ENCODE measurements at regions of chr10 and their contacts with region 1.

Region 1: GRCh38 chr10:70146489-70147258 is at the start of gene TYSND1:
- DNase-seq: peak; percentile 97
- ATAC-seq: peak; percentile 90
- H3K4me3 ChIP-seq: peak within 1 kb of the TSS; percentile 66 to 92 (median 77)
- H3K27ac ChIP-seq: peak within 1 kb of the TSS; percentile 81
- H3K4me1 ChIP-seq: peaks cover 24% of the 10 kb centered on the region
- H3K27me3 ChIP-seq: no peaks in the 10 kb centered on the region
- CTCF ChIP-seq: peak; percentile 97
- EP300 ChIP-seq: no peak; a peak in 1 of 4 replicates
- POLR2A ChIP-seq: peak; percentile 93 to 96
- RAD21 ChIP-seq: peak; percentile 83
- total RNA-seq, gene TYSND1: 6.8 and 8.9 TPM in 2 replicates

Region 2: GRCh38 chr10:69684020-69684980 is 462.4 kb before region 1 on chr10:
- CTCF ChIA-PET with region 1: no interaction called
- POLR2A ChIA-PET with region 1: no interaction called
- in situ Hi-C with region 1: no loop called
- intact Hi-C with region 1: no loop called
- DNase-seq: peak; percentile 46
- ATAC-seq: peak; percentile 89
- H3K4me3 ChIP-seq: peak overlapping the region in 2 of 3 experiments; percentile 11 to 60; a peak in 3 of 6 replicates
- H3K27ac ChIP-seq: peak overlapping the region; percentile 47
- H3K4me1 ChIP-seq: peaks cover 29% of the 10 kb centered on the region
- H3K27me3 ChIP-seq: peaks cover 2 to 28% of the 10 kb centered on the region in 2 experiments; a peak in 2 of 5 replicates
- CTCF ChIP-seq: no peak
- EP300 ChIP-seq: no peak
- POLR2A ChIP-seq: peak in 1 of 2 experiments; percentile 19; a peak in 1 of 4 replicates
- RAD21 ChIP-seq: no peak

Region 3: DNA sequence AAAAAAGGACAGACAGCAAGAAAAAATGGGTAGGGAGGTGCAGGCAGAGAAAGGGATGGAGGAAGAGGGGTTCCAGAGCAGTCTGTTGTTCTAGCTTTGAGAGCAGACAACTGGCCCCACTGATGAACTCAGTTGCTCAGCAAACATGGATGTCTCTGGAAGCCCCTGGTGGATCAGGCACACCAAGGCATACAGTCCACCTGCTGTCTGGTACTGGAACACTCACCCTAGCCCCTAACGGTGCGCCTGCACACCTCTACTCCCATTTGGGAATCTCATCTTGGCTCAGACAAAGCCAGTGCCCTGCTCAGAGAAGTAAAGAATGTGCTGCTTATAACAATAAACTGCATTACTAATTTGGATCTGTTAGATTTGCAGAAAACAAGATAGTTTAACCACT is 86.3 kb before region 1 on chr10:
- CTCF ChIA-PET with region 1: no interaction called
- POLR2A ChIA-PET with region 1: no interaction called
- in situ Hi-C with region 1: no loop called
- intact Hi-C with region 1: no loop called
- DNase-seq: no peak
- ATAC-seq: peak; percentile 77
- H3K4me3 ChIP-seq: no peak overlapping the region
- H3K27ac ChIP-seq: no peak overlapping the region
- H3K4me1 ChIP-seq: no peaks in the 10 kb centered on the region
- H3K27me3 ChIP-seq: no peaks in the 10 kb centered on the region
- CTCF ChIP-seq: no peak
- EP300 ChIP-seq: no peak
- POLR2A ChIP-seq: no peak
- RAD21 ChIP-seq: no peak

Region 4: GRCh38 chr10:70084189-70084588 is 62.5 kb before region 1 on chr10:
- CTCF ChIA-PET with region 1: interaction called, 6 read pairs
- POLR2A ChIA-PET with region 1: interaction called, 27 read pairs
- in situ Hi-C with region 1: no loop called
- intact Hi-C with region 1: loop called (anchors 1 kb)
- DNase-seq: peak; percentile 32
- ATAC-seq: no peak
- H3K4me3 ChIP-seq: no peak overlapping the region
- H3K27ac ChIP-seq: no peak overlapping the region
- H3K4me1 ChIP-seq: peaks cover 62% of the 10 kb centered on the region
- H3K27me3 ChIP-seq: no peaks in the 10 kb centered on the region
- CTCF ChIP-seq: peak; percentile 60
- EP300 ChIP-seq: no peak
- POLR2A ChIP-seq: no peak
- RAD21 ChIP-seq: no peak; the same call in 1 of the 2 replicates

Region 5: DNA sequence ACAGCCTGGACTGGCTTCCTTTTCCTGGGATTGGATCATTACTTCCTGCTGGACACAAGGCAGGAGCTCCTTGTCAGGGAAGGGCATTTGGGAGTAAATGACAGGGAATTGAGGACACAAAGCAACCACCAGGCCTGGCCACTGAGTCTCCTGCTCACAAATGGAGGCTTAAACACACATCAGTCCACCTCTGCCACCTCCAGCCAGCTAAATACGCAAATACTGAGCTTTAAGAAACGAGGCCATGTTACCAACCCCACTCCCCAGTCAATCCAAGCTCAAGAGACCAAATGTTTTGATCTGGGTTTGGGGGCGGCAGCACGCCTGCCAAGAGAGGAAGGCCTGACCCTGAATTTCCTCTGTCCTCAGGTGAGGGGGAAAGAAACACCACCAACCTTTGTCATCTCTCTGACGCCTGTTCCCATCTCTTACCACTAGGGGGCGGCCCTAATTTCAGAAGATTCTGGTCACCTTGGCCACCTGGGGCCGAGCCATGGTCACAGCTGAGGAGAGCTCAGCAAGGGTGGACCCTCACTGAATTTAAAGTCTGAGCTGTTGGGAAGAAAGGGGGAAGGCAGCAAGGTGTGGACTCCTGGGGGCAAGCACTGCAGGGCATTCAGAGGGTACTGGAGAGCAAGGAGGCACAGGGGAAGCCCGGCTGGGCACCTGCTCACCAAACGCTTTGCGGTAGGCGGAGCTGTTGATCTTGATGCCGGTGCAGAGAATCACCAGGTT is 30.6 kb before region 1 on chr10:
- CTCF ChIA-PET with region 1: interaction called, 18 read pairs
- POLR2A ChIA-PET with region 1: interaction called, 34 read pairs
- in situ Hi-C with region 1: no loop called
- intact Hi-C with region 1: loop called (anchors 1 kb)
- DNase-seq: peak; percentile 59
- ATAC-seq: peak; percentile 76
- H3K4me3 ChIP-seq: no peak overlapping the region
- H3K27ac ChIP-seq: no peak overlapping the region
- H3K4me1 ChIP-seq: no peaks in the 10 kb centered on the region
- H3K27me3 ChIP-seq: no peaks in the 10 kb centered on the region
- CTCF ChIP-seq: peak; percentile 86
- EP300 ChIP-seq: no peak
- POLR2A ChIP-seq: no peak
- RAD21 ChIP-seq: peak; percentile 23; the same call in 1 of the 2 replicates

Region 6: DNA sequence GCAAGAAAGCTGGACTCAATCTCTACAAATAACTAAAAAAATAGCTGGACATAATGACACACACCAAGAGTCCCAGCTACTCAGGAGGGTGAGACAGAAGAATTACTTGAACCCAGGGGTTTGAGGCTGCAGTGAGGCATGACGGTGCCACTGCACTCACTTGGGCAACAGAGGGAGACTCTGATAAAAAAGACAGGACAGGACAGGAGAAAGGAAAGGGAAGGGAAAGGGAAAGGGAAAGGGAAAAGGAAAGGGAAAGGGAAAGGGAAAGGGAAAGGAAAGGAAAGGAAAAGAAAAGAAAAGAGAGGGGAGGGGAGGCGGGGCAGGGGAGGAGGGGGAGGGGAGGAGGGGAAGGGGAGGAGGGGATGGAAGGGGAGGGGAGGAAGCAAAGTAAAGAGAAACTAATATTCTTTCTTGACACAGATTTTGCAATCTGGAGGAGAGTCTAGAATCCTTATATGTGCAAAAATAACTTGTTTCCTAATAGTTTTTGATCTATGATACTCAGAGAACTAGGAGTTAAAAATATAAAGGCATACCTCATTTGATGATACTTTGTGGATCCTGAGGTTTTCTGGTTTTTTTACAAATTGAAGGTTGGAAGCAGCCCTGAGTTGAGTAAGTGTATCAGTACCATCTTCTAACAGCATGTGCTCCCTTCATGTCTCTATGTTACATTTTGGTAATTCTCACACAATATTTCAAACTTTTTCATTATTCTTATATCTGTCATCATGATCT is 15.6 kb after region 1 on chr10:
- CTCF ChIA-PET with region 1: no interaction called
- POLR2A ChIA-PET with region 1: interaction called, 84 read pairs
- in situ Hi-C with region 1: no loop called
- intact Hi-C with region 1: no loop called
- DNase-seq: no peak
- ATAC-seq: no peak
- H3K4me3 ChIP-seq: no peak overlapping the region
- H3K27ac ChIP-seq: no peak overlapping the region
- H3K4me1 ChIP-seq: peaks cover 68% of the 10 kb centered on the region
- H3K27me3 ChIP-seq: no peaks in the 10 kb centered on the region
- CTCF ChIP-seq: no peak
- EP300 ChIP-seq: no peak
- POLR2A ChIP-seq: no peak
- RAD21 ChIP-seq: no peak

Region 7: GRCh38 chr10:70363971-70364771 is 217.5 kb after region 1 on chr10:
- CTCF ChIA-PET with region 1: no interaction called
- POLR2A ChIA-PET with region 1: interaction called, 11 read pairs
- in situ Hi-C with region 1: no loop called
- intact Hi-C with region 1: loop called (anchors 1 kb)
- DNase-seq: peak; percentile 88
- ATAC-seq: peak; percentile 95
- H3K4me3 ChIP-seq: peak overlapping the region in 1 of 3 experiments; percentile 13; a peak in 2 of 6 replicates
- H3K27ac ChIP-seq: peak overlapping the region; percentile 52
- H3K4me1 ChIP-seq: peaks cover 42% of the 10 kb centered on the region
- H3K27me3 ChIP-seq: no peaks in the 10 kb centered on the region
- CTCF ChIP-seq: peak; percentile 99
- EP300 ChIP-seq: peak in 1 of 2 experiments; percentile 77; a peak in 1 of 4 replicates
- POLR2A ChIP-seq: no peak
- RAD21 ChIP-seq: peak; percentile 100